Pancreas (tissue), 10 donors: ENCODE measurements at regions of chr15 and their contacts with region 1.

Region 1: DNA sequence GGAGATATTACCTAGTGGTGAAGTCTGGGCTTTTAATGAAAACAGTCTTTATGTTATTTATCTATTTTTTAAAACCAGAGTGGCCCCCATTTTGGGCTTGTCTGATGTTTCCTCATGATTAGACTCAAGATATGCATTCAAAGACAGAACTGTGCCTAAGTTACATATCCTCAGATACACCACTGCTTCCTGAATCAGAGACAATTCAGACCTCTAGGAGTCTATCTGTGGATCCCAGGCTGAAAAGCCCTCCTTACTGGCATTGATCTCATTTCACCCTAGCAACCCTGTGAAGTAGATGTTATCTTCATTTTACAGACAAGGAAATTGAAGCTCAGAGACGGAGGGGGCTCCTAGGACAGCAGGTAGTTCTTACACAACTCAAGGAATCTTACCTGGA is 16.8 kb upstream of the TGM5 start:
- DNase-seq: no peak
- ATAC-seq: no peak
- H3K4me3 ChIP-seq: no peak overlapping the region
- H3K27ac ChIP-seq: no peak overlapping the region
- H3K4me1 ChIP-seq: peaks cover 0 to 3% (median 0%) of the 10 kb centered on the region in 3 donors
- H3K27me3 ChIP-seq: no peaks in the 10 kb centered on the region
- CTCF ChIP-seq: no peak

Region 2: DNA sequence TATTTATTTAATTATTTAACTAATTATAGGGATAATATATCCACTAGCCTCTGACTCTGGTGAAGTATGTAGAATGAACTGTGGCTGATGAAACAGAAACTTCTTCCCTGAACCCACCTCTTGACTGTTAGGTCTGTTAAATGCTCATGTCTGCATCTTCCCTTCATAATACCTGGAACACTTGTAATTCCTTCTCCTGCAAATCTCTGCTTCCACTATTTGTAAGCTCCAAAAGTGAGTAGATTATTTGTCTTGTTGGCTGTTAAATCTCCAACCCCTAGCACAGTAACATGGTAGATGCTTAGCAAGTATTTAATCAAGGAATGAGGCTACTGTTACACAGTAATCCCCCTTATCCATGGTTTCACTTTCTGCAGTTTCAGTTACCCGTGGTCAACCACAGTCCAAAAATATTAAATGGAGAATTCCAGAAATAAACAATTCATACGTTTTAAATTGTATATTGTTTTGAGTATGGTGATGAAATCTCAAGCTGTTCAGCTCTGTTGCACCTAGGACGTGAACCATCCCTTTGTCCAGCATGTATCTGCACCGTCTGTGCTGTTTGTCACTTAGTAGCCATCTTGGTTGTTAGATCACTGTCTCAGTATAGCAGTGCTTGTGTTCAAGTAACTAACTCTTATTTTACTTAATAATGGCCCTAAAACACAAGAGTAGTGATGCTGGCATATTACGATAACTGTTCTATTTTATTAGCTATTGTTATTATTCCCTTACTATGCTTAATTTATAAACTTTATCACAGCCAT is 368.6 kb before region 1 on chr15:
- intact Hi-C with region 1: no loop called
- DNase-seq: no peak
- ATAC-seq: no peak
- H3K4me3 ChIP-seq: no peak overlapping the region
- H3K27ac ChIP-seq: no peak overlapping the region
- H3K4me1 ChIP-seq: peaks cover 0 to 6% (median 3%) of the 10 kb centered on the region in 3 donors
- H3K27me3 ChIP-seq: no peaks in the 10 kb centered on the region
- CTCF ChIP-seq: no peak

Region 3: DNA sequence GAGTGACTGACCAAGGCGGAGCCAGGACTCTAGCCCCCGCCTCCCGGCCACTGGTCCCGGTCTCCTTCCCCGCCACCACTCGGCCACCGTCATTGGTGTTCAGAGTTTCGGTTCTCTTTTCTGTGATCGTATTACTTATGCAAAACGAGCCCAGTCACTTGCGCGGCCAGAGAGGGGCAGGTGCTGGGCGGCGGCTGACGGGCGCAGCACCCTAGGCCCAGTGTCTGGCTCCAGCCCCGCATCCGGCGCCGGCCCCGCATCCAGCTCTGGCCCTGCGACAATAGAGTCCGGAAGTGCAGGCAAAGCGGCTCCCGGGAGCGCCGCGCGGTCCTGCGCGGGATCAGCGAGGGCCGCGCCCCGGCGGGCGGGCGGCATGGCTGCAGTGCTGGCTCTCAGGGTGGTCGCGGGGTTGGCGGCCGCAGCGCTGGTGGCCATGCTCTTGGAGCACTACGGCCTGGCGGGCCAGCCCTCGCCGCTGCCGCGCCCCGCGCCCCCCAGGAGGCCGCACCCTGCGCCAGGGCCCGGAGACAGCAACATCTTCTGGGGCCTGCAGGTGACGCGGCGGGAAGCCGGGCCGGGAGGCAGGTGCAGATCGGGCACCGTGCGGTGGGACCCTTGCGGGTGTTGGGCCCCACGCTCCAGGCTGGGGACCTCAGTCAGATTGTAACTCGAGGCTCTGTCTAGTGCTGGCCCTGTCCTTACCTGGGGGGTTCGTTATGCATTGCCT is 149.9 kb before region 1 on chr15 and contains the start of gene TMEM62:
- intact Hi-C with region 1: no loop called
- DNase-seq: peak; percentile 89 to 94 (median 90)
- ATAC-seq: peak; percentile 94 to 97 (median 96)
- H3K4me3 ChIP-seq: peak within 1 kb of the TSS; percentile 58 to 85 (median 78)
- H3K27ac ChIP-seq: peak within 1 kb of the TSS; percentile 74 to 84 (median 80)
- H3K4me1 ChIP-seq: peaks cover 6 to 9% (median 7%) of the 10 kb centered on the region in 3 donors
- H3K27me3 ChIP-seq: no peaks in the 10 kb centered on the region
- CTCF ChIP-seq: no peak
- total RNA-seq, gene TMEM62: 8.1 to 14.7 (median 10.2) TPM

Region 4: DNA sequence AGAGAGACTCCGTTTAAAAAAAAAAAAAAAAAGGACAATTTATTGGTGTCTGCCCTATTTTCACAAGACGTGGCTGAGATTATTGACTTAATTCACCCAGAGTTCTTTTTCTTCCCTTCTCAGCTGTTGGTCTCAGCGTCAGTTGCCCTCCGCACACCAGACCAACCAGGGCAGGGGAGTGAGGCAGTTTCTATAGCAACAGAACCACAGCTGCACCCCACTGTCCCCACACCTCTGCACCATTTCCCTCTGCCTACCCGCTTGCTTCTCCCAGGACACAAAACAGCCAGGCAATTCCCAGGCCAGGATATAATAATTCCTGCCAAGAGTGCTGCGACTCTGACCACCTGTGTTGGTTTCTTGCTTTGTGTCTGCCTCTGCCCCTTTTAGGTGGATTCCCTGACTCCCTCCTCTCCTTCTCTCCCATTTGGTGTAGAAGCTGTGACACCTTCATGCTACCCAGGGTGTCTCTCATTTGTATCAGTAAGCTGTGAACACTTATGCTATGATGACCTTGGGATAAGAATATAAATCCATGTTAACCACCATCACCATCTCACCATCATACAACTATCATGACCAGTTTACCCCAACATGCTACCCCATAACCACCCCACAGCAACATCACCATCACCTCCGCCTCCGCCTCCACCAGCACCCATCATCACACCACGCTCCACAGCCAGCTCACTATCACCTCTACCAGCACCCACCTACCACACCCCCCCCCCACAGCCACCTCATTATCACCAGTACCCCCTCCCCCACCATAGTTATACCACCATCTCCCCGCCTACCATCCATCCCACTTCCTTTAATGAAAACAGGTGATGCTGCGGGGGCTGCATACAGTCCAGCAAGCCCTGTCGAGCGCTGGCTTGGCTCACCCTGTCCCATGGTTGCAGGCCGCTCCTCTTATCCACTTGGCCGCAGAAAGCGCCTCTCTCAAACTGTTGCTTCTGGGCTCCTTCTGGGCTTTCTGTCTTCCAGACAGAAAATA is 63.3 kb before region 1 on chr15:
- intact Hi-C with region 1: loop called in 1 of 3 experiments (anchors 5 kb)
- DNase-seq: no peak
- ATAC-seq: no peak
- H3K4me3 ChIP-seq: no peak overlapping the region
- H3K27ac ChIP-seq: no peak overlapping the region
- H3K4me1 ChIP-seq: no peaks in the 10 kb centered on the region
- H3K27me3 ChIP-seq: no peaks in the 10 kb centered on the region
- CTCF ChIP-seq: no peak

Region 5: DNA sequence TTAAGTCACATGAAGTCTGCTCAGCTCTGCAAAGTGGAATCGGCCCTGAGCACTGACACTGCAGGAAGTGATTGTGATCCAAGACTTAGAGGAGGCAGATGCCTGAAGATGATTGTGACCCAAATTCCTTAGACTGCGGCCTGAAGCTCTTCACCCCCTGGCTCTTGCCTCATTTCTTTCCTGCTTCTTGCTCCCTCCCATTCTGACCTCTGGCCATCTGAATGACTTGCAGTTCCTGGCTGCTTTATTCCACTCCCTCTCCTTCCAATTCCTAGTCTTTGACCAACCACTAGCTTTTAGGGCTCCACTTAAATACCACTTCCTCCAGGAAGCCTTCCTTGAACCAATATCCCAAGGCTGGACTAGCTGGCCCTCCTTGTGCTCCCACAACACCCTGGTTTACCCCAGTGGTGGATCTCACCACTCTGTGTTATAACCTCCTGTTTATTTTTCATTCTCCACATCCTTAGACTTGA is 52.8 kb before region 1 on chr15:
- intact Hi-C with region 1: loop called in 1 of 3 experiments (anchors 5 kb)
- DNase-seq: no peak
- ATAC-seq: peak in 2 of 4 donors; percentile 41 to 61
- H3K4me3 ChIP-seq: no peak overlapping the region
- H3K27ac ChIP-seq: no peak overlapping the region
- H3K4me1 ChIP-seq: no peaks in the 10 kb centered on the region
- H3K27me3 ChIP-seq: no peaks in the 10 kb centered on the region
- CTCF ChIP-seq: no peak

Region 6: GRCh38 chr15:43410572-43411214 is 127.2 kb after region 1 on chr15:
- intact Hi-C with region 1: no loop called
- DNase-seq: no peak
- ATAC-seq: no peak
- H3K4me3 ChIP-seq: no peak overlapping the region
- H3K27ac ChIP-seq: no peak overlapping the region
- H3K4me1 ChIP-seq: no peaks in the 10 kb centered on the region
- H3K27me3 ChIP-seq: no peaks in the 10 kb centered on the region
- CTCF ChIP-seq: no peak